ENCODE measurements at regions of chr9 and their contacts with region 1.

Region 1: GRCh38 chr9:129783516-129784361 is 19.2 kb upstream of the TOR1B start:
- DNase-seq: peak; percentile 81
- ATAC-seq: peak; percentile 99
- H3K4me3 ChIP-seq: no peak overlapping the region
- H3K4me3 Mint-ChIP-seq: no peak overlapping the region
- H3K27ac ChIP-seq: no peak overlapping the region
- H3K27ac Mint-ChIP-seq: no peak overlapping the region
- H3K4me1 ChIP-seq: no peaks in the 10 kb centered on the region
- H3K4me1 Mint-ChIP-seq: no peaks in the 10 kb centered on the region
- H3K27me3 ChIP-seq: peaks cover 0 to 19% (median 1%) of the 10 kb centered on the region in 4 experiments
- H3K27me3 Mint-ChIP-seq: peaks cover 19% of the 10 kb centered on the region
- CTCF ChIP-seq: peak; percentile 89

Region 2: GRCh38 chr9:129726322-129727160 is 57.2 kb before region 1 on chr9:
- CTCF ChIA-PET with region 1: interaction called, 5 read pairs
- POLR2A ChIA-PET with region 1: no interaction called
- intact Hi-C with region 1: loop called (anchors 1 kb)
- DNase-seq: peak; percentile 56
- ATAC-seq: peak; percentile 75
- H3K4me3 ChIP-seq: no peak overlapping the region
- H3K4me3 Mint-ChIP-seq: peak overlapping the region; percentile 26
- H3K27ac ChIP-seq: no peak overlapping the region
- H3K27ac Mint-ChIP-seq: no peak overlapping the region
- H3K4me1 ChIP-seq: peaks cover 5% of the 10 kb centered on the region in 2 donors
- H3K4me1 Mint-ChIP-seq: no peaks in the 10 kb centered on the region
- H3K27me3 ChIP-seq: peaks cover 0 to 14% (median 5%) of the 10 kb centered on the region in 4 experiments
- H3K27me3 Mint-ChIP-seq: peaks cover 26% of the 10 kb centered on the region
- CTCF ChIP-seq: peak; percentile 81

Region 3: GRCh38 chr9:129816501-129817435 is 33.0 kb after region 1 on chr9:
- CTCF ChIA-PET with region 1: no interaction called
- POLR2A ChIA-PET with region 1: no interaction called
- intact Hi-C with region 1: no loop called
- DNase-seq: no peak
- ATAC-seq: no peak
- H3K4me3 ChIP-seq: no peak overlapping the region
- H3K4me3 Mint-ChIP-seq: no peak overlapping the region
- H3K27ac ChIP-seq: no peak overlapping the region
- H3K27ac Mint-ChIP-seq: no peak overlapping the region
- H3K4me1 ChIP-seq: no peaks in the 10 kb centered on the region
- H3K4me1 Mint-ChIP-seq: peaks cover 4% of the 10 kb centered on the region
- H3K27me3 ChIP-seq: no peaks in the 10 kb centered on the region
- H3K27me3 Mint-ChIP-seq: no peaks in the 10 kb centered on the region
- CTCF ChIP-seq: no peak

Region 4: GRCh38 chr9:129863059-129863690 is 79.4 kb after region 1 on chr9:
- CTCF ChIA-PET with region 1: no interaction called
- POLR2A ChIA-PET with region 1: no interaction called
- intact Hi-C with region 1: no loop called
- DNase-seq: no peak
- ATAC-seq: no peak
- H3K4me3 ChIP-seq: no peak overlapping the region
- H3K4me3 Mint-ChIP-seq: no peak overlapping the region
- H3K27ac ChIP-seq: no peak overlapping the region
- H3K27ac Mint-ChIP-seq: peak overlapping the region; percentile 10
- H3K4me1 ChIP-seq: no peaks in the 10 kb centered on the region
- H3K4me1 Mint-ChIP-seq: peaks cover 8% of the 10 kb centered on the region
- H3K27me3 ChIP-seq: no peaks in the 10 kb centered on the region
- H3K27me3 Mint-ChIP-seq: no peaks in the 10 kb centered on the region
- CTCF ChIP-seq: no peak

Measured in B cell (primary cell).